ENCODE measurements at regions of chr11 and their contacts with region 1.

Region 1: GRCh38 chr11:7986768-7987559 is at the start of gene EIF3F:
- DNase-seq: peak; percentile 86
- ATAC-seq: peak; percentile 100
- total RNA-seq, gene EIF3F: 156 TPM

Region 2: DNA sequence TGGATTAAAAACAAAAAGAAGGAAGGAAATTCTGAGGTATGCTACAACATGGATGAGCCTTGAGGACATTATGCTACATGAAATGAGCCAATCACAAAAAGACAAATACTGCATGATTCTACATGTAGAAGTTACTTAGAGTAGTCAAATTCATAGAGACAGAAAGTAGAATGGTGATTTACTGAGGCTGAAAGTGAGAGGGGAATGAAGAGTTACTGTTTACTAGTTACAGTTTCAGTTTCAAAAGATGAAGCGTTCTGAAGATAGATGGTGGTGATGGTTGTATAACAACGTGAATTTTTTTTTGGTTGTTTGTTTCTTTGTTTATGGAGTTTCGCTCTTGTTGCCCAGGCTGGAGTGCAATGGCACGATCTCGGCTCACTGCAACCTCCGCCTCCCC is 199.7 kb before region 1 on chr11:
- intact Hi-C with region 1: no loop called
- DNase-seq: no peak
- ATAC-seq: no peak

Region 3: GRCh38 chr11:7892840-7893254 is 94.1 kb before region 1 on chr11:
- intact Hi-C with region 1: loop called (anchors 10 kb)
- DNase-seq: no peak
- ATAC-seq: peak; percentile 57